ENCODE measurements at regions of chr22 and their contacts with region 1.

Region 1: GRCh38 chr22:27919222-27919941 is at the start of gene PITPNB:
- DNase-seq: peak; percentile 99
- H3K4me3 Mint-ChIP-seq: peak within 1 kb of the TSS; percentile 100
- H3K27ac Mint-ChIP-seq: peak within 1 kb of the TSS; percentile 99
- H3K4me1 Mint-ChIP-seq: peaks cover 62% of the 10 kb centered on the region
- H3K27me3 Mint-ChIP-seq: no peaks in the 10 kb centered on the region
- total RNA-seq, gene PITPNB: 92.2 to 95.7 TPM

Region 2: GRCh38 chr22:26672590-26673468 is 1246.6 kb before region 1 on chr22:
- CTCF ChIA-PET with region 1: interaction called, 4 read pairs
- POLR2A ChIA-PET with region 1: interaction called, 4 read pairs
- intact Hi-C with region 1: loop called (anchors 5 kb)
- DNase-seq: peak; percentile 97
- H3K4me3 Mint-ChIP-seq: peak overlapping the region; percentile 94
- H3K27ac Mint-ChIP-seq: peak overlapping the region; percentile 100
- H3K4me1 Mint-ChIP-seq: peaks cover 67% of the 10 kb centered on the region
- H3K27me3 Mint-ChIP-seq: no peaks in the 10 kb centered on the region

Region 3: GRCh38 chr22:27880778-27881394 is 38.5 kb before region 1 on chr22:
- CTCF ChIA-PET with region 1: interaction called, 38 read pairs
- POLR2A ChIA-PET with region 1: no interaction called
- intact Hi-C with region 1: no loop called
- DNase-seq: no peak
- H3K4me3 Mint-ChIP-seq: no peak overlapping the region
- H3K27ac Mint-ChIP-seq: no peak overlapping the region
- H3K4me1 Mint-ChIP-seq: peaks cover 27% of the 10 kb centered on the region
- H3K27me3 Mint-ChIP-seq: no peaks in the 10 kb centered on the region

Region 4: DNA sequence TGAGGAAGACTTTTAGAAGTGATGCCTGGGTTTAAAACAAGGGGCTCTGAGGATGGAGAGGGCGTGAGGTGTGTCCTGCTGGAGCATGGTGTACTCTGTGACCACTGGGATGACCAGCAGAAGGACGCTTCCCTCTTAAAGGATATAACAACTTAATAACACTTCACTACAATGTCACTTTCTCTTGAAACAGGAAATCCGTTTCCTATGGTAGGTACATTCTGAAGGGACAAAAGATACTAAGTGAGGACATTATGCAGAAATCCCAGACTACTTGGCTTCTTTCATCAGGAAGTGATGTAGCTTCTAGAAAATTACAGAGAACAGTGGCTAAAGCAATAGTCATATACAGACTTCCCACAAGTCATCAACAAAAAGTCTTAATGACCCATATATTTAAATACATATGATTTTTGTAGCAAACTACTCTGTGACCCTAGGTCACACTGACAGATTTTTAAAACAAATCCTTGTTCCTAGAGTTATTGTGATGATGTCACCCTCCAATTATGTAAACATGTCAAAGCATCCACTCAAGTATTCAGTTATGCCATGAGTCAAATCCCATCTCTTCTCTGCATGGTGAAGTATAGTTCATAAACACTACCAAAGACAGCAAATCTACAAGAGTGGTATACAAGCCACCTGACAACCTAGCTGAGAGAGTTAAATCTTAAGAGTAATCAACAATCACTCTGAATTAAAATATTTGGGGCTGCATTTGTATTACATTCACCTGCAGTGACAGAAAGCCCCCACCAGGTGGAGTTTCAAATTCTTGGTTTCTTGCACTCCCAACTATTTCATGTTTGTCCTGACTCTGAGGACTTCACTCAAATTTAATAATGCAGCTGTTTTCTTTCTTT is 33.2 kb before region 1 on chr22:
- CTCF ChIA-PET with region 1: interaction called, 38 read pairs
- POLR2A ChIA-PET with region 1: interaction called, 3 read pairs
- intact Hi-C with region 1: no loop called
- DNase-seq: peak; percentile 48
- H3K4me3 Mint-ChIP-seq: no peak overlapping the region
- H3K27ac Mint-ChIP-seq: no peak overlapping the region
- H3K4me1 Mint-ChIP-seq: no peaks in the 10 kb centered on the region
- H3K27me3 Mint-ChIP-seq: no peaks in the 10 kb centered on the region

Region 5: DNA sequence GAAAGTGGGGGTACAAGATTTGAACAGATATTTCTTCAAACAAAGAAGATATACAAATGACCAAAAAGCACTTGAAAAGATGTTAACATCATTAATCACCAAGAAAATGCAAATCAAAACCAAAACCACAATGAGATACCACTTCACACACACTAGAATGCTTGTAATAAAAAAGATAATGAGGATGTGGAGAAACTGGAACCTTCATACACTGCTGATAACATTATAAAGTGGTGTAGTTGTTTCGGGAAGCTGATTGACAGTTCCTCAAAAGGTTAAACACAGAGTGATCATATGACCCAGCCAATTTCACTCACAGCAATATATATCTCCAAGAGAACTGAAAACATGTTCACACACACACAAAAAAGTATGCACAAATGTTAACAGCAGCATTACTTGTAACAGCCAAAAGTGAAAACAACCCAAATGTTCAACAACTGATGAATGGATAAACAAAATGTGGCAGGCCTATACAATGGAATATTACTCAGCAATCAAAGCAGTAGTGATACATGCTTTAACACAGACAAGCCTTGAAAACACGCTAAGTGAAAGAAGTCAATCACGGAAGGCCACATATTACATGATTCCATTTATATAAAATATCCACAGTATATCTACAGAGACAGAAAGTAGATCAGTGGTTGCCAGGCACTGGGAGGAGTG is 15.4 kb before region 1 on chr22:
- CTCF ChIA-PET with region 1: interaction called, 6 read pairs
- POLR2A ChIA-PET with region 1: interaction called, 6 read pairs
- intact Hi-C with region 1: loop called (anchors 2 kb)
- DNase-seq: no peak
- H3K4me3 Mint-ChIP-seq: no peak overlapping the region
- H3K27ac Mint-ChIP-seq: no peak overlapping the region
- H3K4me1 Mint-ChIP-seq: peaks cover 61% of the 10 kb centered on the region
- H3K27me3 Mint-ChIP-seq: no peaks in the 10 kb centered on the region

Measured in activated CD4-positive, alpha-beta memory T cell treated with anti-CD3 and anti-CD28 coated beads for 36 hours (primary cell).